ENCODE measurements at regions of chr2 and their contacts with region 1.

Region 1: DNA sequence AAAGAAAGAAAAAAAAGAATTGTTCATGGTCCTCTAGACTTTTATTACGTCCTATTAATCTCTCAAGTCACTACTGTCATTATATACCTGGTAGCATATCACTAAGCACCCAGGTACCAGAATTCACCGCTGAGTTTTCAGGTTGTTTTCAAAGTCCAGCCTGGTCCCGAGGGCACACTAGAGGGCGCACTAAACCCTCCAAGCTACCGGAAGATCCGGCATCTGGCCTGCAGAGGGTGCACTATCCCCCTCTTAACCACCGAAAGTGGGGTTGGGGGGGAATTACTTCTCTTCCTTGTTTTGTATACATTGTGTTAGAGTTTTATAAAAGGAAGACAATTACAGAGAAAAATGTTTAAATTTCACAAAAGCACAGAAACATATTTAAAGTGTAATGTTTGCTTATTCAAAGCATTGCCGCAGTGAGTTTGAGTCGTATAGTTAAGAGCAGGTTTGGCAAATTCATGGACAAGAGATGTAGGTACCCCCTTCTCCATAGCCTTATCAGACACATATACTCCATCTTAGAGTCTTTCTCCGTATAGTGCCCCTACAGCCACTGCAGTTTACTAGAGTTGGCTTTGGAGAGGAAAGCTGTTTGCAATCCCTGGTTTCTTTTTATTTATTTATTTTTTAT is 19.2 kb downstream of the MOGAT1 start:
- DNase-seq: peak; percentile 89
- CTCF ChIP-seq: peak; percentile 99

Region 2: GRCh38 chr2:222451224-222451674 is 239.4 kb before region 1 on chr2:
- CTCF ChIA-PET with region 1: no interaction called
- POLR2A ChIA-PET with region 1: no interaction called
- DNase-seq: peak; percentile 30
- CTCF ChIP-seq: no peak

Region 3: DNA sequence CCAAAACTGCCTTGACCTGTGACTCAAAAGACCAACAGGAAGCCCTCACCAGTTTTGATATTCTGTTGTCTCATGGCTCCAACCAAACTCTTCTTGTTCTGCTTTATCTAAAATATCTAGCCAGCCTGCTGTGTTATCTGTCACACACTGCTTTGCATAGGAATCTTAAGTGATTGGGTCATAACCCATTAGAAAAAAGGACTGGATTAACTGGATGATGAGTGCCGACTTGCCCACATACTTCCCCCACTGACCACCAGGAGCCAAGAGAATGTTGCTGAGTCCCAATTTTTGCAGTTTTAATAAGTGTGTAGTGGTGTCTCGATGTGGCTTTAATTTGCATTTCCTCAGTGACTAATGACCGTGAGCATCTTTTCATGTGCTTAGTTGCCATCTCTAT is 12.7 kb before region 1 on chr2:
- CTCF ChIA-PET with region 1: interaction called, 16 read pairs
- POLR2A ChIA-PET with region 1: no interaction called
- DNase-seq: no peak
- CTCF ChIP-seq: no peak

Region 4: DNA sequence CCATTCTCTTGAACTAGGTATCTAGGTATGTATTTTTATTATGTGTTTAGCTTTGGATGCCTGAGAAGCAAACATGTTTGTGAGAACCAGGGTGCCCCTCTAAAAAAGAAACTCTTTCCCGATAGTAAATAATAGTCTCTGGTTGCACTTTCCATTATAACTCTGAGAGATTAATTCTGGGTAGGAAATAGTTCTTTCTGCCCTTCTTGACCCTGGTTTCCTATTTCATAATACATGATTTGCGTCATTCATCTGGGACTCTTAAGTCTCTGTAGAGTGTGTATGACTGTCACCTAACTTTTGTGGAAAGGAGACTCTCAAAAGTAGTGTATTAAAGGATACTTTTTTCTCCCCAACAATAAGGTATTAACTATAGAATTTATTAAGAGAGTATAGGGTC is 201.6 kb after region 1 on chr2:
- CTCF ChIA-PET with region 1: interaction called, 13 read pairs
- POLR2A ChIA-PET with region 1: no interaction called
- DNase-seq: no peak
- CTCF ChIP-seq: no peak

Region 5: GRCh38 chr2:222912117-222912516 is 221.4 kb after region 1 on chr2:
- CTCF ChIA-PET with region 1: interaction called, 27 read pairs
- POLR2A ChIA-PET with region 1: no interaction called
- DNase-seq: peak; percentile 81
- CTCF ChIP-seq: no peak

Region 6: DNA sequence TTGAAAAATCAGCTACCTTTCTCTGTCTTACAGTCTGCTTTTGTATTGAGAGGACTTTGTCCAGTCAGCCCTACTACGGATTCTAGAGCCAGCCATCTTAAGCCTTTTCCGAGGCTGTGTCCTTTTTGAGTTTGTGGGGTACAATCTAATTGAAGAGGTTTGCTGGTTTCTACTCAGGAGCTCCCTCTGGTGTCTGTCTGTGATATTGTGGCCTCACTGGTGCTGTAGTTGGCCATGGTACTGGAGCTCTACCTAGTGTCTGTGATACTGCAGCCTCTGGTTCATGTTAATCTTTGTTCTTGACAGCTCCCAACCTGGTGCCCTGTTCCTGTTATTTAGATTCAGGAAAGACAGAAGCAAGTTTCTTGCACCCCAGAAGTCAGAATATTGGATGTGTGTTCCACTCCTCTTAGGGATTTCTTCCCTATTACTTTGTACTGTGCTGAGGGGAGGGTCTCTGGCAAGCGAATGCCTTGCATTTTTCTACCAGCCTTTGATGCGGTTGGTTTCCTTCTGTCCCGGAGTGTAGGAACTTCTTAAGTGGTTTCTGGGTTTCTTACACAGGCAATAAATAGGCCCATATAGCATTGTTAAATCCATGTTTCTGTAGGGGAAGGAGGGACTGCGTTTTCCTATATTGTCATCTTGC is 248.7 kb after region 1 on chr2:
- CTCF ChIA-PET with region 1: interaction called, 14 read pairs
- POLR2A ChIA-PET with region 1: no interaction called
- DNase-seq: peak; percentile 24
- CTCF ChIP-seq: peak; percentile 67

Measured in GM10248 (cell line).